PC-3 (cell line): ENCODE measurements at regions of chr17 and their contacts with region 1.

Region 1: DNA sequence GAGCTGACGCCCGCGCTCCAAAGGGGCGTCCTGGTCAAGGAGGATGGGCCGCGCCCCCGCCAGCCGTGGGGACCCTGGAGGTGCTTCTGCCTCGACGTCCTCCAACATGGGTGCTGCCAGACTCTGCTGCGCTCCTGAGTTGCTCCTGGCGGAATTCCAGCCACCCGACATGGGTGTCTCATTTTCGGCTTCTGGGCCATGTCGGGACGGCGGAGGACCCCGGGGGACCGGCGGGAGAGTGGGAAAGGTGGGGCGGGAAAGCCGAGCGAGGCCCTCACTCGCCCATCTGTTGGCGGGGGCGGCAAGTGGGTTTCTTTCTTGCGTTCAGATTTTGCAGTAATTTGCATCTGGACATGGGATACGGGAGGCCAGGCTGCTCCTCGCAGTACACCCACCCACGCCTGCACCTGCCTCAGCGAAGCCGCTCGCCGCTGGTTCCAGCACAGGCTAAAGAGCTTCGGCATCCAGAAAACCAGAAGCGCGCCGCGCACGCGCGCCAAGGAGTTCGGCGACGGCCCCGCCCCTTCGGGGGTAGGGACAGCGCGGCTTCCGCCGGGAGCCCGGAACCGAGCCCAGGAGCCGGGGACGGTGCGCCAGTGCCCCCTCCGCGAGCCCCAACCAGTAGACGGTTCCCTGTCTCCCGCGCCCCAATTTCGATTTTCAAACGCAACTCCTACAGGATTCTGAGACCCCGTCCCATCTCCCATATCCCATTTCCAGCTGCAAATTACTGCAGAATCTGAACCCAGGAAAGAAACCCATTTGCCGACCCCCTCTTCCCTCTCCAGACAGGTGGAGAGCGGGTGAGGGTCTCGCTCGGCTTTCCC is at the start of gene ARMC7:
- DNase-seq: peak; percentile 96
- ATAC-seq: peak; percentile 63
- H3K4me3 ChIP-seq: peak within 1 kb of the TSS; percentile 97
- H3K27ac ChIP-seq: no peak within 1 kb of the TSS
- H3K4me1 ChIP-seq: peaks cover 35% of the 10 kb centered on the region
- H3K27me3 ChIP-seq: no peaks in the 10 kb centered on the region
- CTCF ChIP-seq: peak; percentile 19; the same call in 1 of the 2 replicates
- total RNA-seq, gene ARMC7: 17.0 and 17.3 TPM in 2 replicates

Region 2: GRCh38 chr17:75059369-75060345 is 50.0 kb before region 1 on chr17:
- CTCF ChIA-PET with region 1: interaction called, 14 read pairs
- POLR2A ChIA-PET with region 1: interaction called, 3 read pairs
- intact Hi-C with region 1: no loop called
- DNase-seq: peak; percentile 60
- ATAC-seq: peak; percentile 74
- H3K4me3 ChIP-seq: no peak overlapping the region
- H3K27ac ChIP-seq: no peak overlapping the region
- H3K4me1 ChIP-seq: no peaks in the 10 kb centered on the region
- H3K27me3 ChIP-seq: no peaks in the 10 kb centered on the region
- CTCF ChIP-seq: peak; percentile 60

Region 3: GRCh38 chr17:75124041-75124818 is 14.6 kb after region 1 on chr17:
- CTCF ChIA-PET with region 1: interaction called, 18 read pairs
- POLR2A ChIA-PET with region 1: no interaction called
- intact Hi-C with region 1: no loop called
- DNase-seq: peak; percentile 100
- ATAC-seq: peak; percentile 96
- H3K4me3 ChIP-seq: peak overlapping the region; percentile 2; the same call in 1 of the 2 replicates
- H3K27ac ChIP-seq: peak overlapping the region; percentile 94
- H3K4me1 ChIP-seq: peaks cover 24% of the 10 kb centered on the region
- H3K27me3 ChIP-seq: no peaks in the 10 kb centered on the region
- CTCF ChIP-seq: peak; percentile 40

Region 4: GRCh38 chr17:75173526-75173925 is 63.9 kb after region 1 on chr17:
- CTCF ChIA-PET with region 1: interaction called, 17 read pairs
- POLR2A ChIA-PET with region 1: no interaction called
- intact Hi-C with region 1: loop called (anchors 1 kb)
- DNase-seq: no peak
- ATAC-seq: no peak
- H3K4me3 ChIP-seq: no peak overlapping the region
- H3K27ac ChIP-seq: no peak overlapping the region
- H3K4me1 ChIP-seq: no peaks in the 10 kb centered on the region
- H3K27me3 ChIP-seq: no peaks in the 10 kb centered on the region
- CTCF ChIP-seq: no peak

Region 5: DNA sequence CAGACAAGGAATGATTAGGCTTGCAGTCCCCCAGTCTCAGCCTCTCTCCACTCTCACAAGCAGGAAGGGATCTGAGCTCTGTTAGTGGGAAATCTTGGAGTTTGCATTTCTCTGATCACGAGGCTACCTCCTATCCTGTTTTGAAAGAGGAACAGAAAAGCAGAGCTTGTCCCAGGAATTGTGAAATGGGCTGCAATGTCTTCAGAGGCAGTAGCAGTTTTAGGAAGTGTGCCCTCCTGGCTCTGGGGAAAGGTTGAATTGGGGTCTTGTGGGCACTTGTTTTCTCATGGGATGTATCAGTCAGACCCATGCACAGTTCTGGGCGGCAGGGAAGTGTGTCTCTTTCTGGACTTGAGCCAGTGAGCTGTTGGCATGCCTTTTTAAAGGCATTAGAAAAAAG is 118.7 kb after region 1 on chr17:
- CTCF ChIA-PET with region 1: no interaction called
- POLR2A ChIA-PET with region 1: no interaction called
- intact Hi-C with region 1: no loop called
- DNase-seq: no peak
- ATAC-seq: no peak
- H3K4me3 ChIP-seq: no peak overlapping the region
- H3K27ac ChIP-seq: no peak overlapping the region
- H3K4me1 ChIP-seq: no peaks in the 10 kb centered on the region
- H3K27me3 ChIP-seq: no peaks in the 10 kb centered on the region
- CTCF ChIP-seq: no peak

Region 6: GRCh38 chr17:75412455-75413317 is 303.1 kb after region 1 on chr17:
- CTCF ChIA-PET with region 1: interaction called, 12 read pairs
- POLR2A ChIA-PET with region 1: no interaction called
- intact Hi-C with region 1: loop called (anchors 10 kb)
- DNase-seq: peak; percentile 88
- ATAC-seq: peak; percentile 84
- H3K4me3 ChIP-seq: peak overlapping the region; percentile 42
- H3K27ac ChIP-seq: no peak overlapping the region
- H3K4me1 ChIP-seq: 0 out of 2 replicates have a peak, but pooled peaks cover 3% of the 10 kb centered on the region
- H3K27me3 ChIP-seq: no peaks in the 10 kb centered on the region
- CTCF ChIP-seq: peak; percentile 91